ENCODE measurements at regions of chr17 and their contacts with region 1.

Region 1: DNA sequence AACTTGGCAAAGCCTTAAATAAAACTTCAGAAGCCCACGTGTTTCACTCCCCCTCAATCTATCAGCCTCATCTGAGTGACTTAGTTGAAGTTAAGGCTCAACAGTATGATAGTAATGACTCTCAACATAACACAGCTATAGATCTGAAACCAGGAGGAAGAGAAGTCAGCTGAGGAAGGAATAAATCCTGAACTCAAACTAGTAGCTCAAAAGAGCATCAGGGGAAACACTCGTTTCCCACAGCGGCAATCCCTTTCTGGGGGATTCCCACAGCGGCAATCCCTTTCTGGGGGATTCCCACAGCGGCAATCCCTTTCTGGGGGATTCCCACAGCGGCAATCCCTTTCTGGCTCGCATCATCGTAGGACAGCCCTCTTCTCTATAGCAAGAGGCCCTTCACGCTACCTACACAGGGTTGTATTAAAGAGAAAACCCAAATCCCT is 56.8 kb downstream of the ZZEF1 start:
- DNase-seq: peak; percentile 76
- H3K4me3 Mint-ChIP-seq: no peak overlapping the region
- H3K27ac Mint-ChIP-seq: peak overlapping the region; percentile 31
- H3K4me1 Mint-ChIP-seq: peaks cover 25% of the 10 kb centered on the region
- H3K27me3 Mint-ChIP-seq: no peaks in the 10 kb centered on the region

Region 2: GRCh38 chr17:3762922-3763776 is 322.9 kb before region 1 on chr17:
- CTCF ChIA-PET with region 1: no interaction called
- POLR2A ChIA-PET with region 1: no interaction called
- intact Hi-C with region 1: no loop called
- DNase-seq: peak; percentile 70
- H3K4me3 Mint-ChIP-seq: peak overlapping the region; percentile 14
- H3K27ac Mint-ChIP-seq: peak overlapping the region; percentile 87
- H3K4me1 Mint-ChIP-seq: peaks cover 43% of the 10 kb centered on the region
- H3K27me3 Mint-ChIP-seq: peaks cover 2% of the 10 kb centered on the region

Region 3: GRCh38 chr17:4004517-4005295 is 81.4 kb before region 1 on chr17:
- CTCF ChIA-PET with region 1: no interaction called
- POLR2A ChIA-PET with region 1: no interaction called
- intact Hi-C with region 1: no loop called
- DNase-seq: peak; percentile 65
- H3K4me3 Mint-ChIP-seq: no peak overlapping the region
- H3K27ac Mint-ChIP-seq: no peak overlapping the region
- H3K4me1 Mint-ChIP-seq: peaks cover 6% of the 10 kb centered on the region
- H3K27me3 Mint-ChIP-seq: no peaks in the 10 kb centered on the region

Region 4: DNA sequence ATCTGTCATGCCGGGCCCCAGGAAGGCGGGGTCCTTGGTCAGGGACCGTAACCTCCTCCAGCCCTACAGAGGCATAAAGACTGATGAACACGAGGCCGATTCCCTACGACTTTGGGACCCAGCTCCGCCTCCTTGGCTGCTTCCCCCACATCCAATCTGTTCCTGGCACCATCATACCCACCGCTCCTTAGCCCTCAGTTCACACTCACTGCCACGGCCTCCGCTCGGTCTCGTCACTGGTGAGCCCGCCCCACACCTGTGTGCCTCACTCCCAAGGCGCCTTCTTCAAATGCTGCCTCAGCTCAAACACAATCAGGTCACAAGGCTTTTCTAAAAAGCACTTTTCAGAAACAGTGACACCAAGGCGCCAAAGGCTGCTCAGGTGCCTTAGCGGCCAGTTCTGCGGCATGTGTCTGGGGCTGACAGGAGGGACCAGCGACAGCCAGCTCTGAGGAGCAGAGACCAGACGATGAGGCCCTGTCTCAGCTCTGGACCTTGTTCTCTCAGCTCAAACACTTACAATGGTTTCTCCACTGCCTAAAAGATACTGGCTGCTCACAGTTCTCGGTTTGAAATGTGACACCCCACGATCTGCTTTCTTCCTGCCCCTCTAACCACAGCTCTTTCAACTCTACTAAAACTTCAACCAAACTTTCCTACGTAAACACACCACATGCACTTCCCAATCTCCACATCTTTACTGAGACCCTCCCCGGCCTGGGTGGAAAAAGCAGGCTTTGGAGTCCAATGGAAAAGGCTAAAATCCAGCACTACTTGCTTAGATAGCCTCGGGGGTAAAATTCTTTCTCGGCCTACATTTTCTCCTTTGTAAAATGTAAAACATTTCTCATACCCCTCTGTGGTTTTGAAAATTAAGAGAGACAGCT is 90.1 kb after region 1 on chr17:
- CTCF ChIA-PET with region 1: no interaction called
- POLR2A ChIA-PET with region 1: no interaction called
- intact Hi-C with region 1: loop called (anchors 1 kb)
- DNase-seq: peak; percentile 62
- H3K4me3 Mint-ChIP-seq: peak overlapping the region; percentile 71
- H3K27ac Mint-ChIP-seq: peak overlapping the region; percentile 99
- H3K4me1 Mint-ChIP-seq: peaks cover 53% of the 10 kb centered on the region
- H3K27me3 Mint-ChIP-seq: no peaks in the 10 kb centered on the region

Measured in activated CD4-positive, alpha-beta memory T cell treated with anti-CD3 and anti-CD28 coated beads for 36 hours (primary cell).